Activated CD4-positive, alpha-beta T cell treated with anti-CD3 and anti-CD28 coated beads for 36 hours (primary cell): ENCODE measurements at regions of chr3 and their contacts with region 1.

Region 1: DNA sequence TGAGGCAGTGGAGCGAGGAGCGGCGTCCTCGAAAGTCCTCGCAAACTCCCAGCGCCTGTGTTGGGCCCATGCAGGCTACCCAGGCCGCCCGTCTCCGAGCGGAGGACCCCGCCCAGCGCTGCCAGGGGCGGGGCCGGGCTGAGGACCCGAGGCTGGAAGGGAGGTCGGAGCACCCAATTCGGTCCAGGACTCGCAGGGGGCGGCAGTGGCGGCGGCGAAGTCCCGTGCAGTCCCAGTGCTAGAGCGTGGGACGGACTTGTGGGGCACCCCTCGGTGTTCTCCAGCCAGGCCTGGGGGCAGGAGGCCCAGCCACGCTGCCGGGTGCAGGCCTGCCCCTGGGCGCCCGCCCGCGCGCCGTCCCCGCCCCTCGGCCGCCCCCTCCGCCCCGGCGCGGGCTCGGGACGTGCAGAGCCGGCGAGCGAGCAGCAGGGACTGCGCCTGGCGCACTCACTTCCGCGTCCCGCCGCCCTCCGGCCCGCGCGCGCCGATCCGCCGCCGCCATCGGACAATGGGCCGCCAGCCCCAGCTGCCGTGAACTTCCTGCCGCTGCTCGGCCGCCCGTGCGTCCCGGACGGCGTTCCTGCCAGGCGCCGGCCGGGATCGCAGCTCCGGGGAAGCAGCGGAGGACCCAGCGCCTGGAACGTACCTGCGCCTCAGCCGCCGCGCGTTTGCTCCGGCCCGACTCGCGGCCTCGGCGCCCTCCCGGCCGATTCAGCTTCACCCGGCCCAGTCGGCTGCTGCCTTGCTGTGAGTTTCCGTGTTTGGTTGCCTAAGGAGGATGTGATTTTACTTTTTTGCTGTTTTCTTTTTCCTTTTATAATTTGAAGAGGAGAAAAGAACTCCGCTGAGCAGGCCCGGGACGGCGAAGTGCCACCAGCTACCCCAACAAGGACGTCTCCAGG is 592 bp upstream of the LIMD1 start:
- DNase-seq: peak; percentile 82
- ATAC-seq: peak; percentile 81
- H3K4me3 Mint-ChIP-seq: peak overlapping the region; percentile 86
- H3K27ac Mint-ChIP-seq: peak overlapping the region; percentile 82
- H3K4me1 Mint-ChIP-seq: peaks cover 46% of the 10 kb centered on the region
- H3K27me3 Mint-ChIP-seq: no peaks in the 10 kb centered on the region

Region 2: DNA sequence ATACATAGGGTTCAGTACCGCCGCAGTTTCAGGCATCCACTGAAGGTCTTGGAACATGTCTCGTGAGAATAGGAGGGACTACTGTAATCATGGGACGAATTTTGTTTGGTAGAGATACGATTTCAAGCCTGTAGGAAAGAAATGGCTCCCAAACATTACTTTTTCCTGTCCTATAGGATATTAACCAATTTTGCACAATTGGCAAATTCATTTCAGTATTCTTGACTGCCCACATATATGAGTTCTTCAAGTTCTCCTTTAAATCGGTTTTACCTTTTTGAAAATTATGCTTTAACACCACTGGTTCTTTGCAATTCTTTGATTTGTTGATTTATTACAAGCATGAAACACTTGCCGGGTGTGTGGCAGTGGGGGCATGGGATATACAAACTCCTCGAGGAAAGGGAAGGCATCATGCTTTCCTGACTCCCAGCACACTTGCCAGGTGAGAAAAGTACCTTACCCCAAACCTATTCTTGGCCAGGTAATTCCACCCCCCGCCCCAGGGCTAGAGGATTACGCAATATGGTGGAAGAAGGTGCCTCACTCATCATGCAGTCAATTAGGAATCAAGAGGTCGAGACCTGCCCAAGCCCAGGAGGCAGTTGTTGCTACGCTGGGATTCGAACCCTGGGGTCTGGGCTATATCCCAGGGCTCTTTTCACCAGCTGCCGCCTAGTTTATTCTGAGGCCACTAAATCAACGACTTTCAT is 206.2 kb before region 1 on chr3:
- CTCF ChIA-PET with region 1: no interaction called
- POLR2A ChIA-PET with region 1: no interaction called
- intact Hi-C with region 1: loop called in 1 of 2 experiments (anchors 1 kb)
- DNase-seq: no peak
- ATAC-seq: peak; percentile 8
- H3K4me3 Mint-ChIP-seq: peak overlapping the region; percentile 85
- H3K27ac Mint-ChIP-seq: peak overlapping the region; percentile 51
- H3K4me1 Mint-ChIP-seq: peaks cover 13% of the 10 kb centered on the region
- H3K27me3 Mint-ChIP-seq: peaks cover 1% of the 10 kb centered on the region

Region 3: DNA sequence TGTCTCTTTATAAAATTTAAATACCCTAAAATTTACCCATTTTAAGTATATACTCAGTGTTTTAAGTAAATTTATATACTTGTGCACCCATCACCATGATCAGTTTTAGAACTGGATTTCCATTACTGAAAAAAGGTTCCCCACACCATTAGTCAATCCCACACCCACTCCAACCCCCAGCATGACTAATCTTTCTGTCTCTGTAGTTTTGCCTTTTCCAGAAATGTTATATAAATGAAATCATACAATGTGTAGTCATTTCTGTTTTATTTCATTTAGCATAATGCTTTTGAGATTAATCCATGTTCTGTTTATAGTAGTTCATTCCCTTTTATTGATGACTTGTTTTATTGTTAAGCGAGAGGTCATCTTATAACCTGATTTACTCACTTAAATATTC is 65.5 kb before region 1 on chr3:
- CTCF ChIA-PET with region 1: no interaction called
- POLR2A ChIA-PET with region 1: no interaction called
- intact Hi-C with region 1: loop called in 1 of 2 experiments (anchors 2 kb)
- DNase-seq: peak; percentile 66
- ATAC-seq: peak; percentile 76
- H3K4me3 Mint-ChIP-seq: no peak overlapping the region
- H3K27ac Mint-ChIP-seq: no peak overlapping the region
- H3K4me1 Mint-ChIP-seq: peaks cover 15% of the 10 kb centered on the region
- H3K27me3 Mint-ChIP-seq: no peaks in the 10 kb centered on the region

Region 4: GRCh38 chr3:45665101-45665572 is 71.2 kb after region 1 on chr3:
- CTCF ChIA-PET with region 1: interaction called, 14 read pairs
- POLR2A ChIA-PET with region 1: no interaction called
- intact Hi-C with region 1: loop called in 1 of 2 experiments (anchors 2 kb)
- DNase-seq: peak; percentile 76
- ATAC-seq: peak; percentile 23
- H3K4me3 Mint-ChIP-seq: peak overlapping the region; percentile 67
- H3K27ac Mint-ChIP-seq: peak overlapping the region; percentile 68
- H3K4me1 Mint-ChIP-seq: peaks cover 54% of the 10 kb centered on the region
- H3K27me3 Mint-ChIP-seq: no peaks in the 10 kb centered on the region

Region 5: GRCh38 chr3:45679805-45680204 is 85.8 kb after region 1 on chr3:
- CTCF ChIA-PET with region 1: no interaction called
- POLR2A ChIA-PET with region 1: no interaction called
- intact Hi-C with region 1: no loop called
- DNase-seq: no peak
- ATAC-seq: no peak
- H3K4me3 Mint-ChIP-seq: no peak overlapping the region
- H3K27ac Mint-ChIP-seq: no peak overlapping the region
- H3K4me1 Mint-ChIP-seq: peaks cover 25% of the 10 kb centered on the region
- H3K27me3 Mint-ChIP-seq: no peaks in the 10 kb centered on the region

Region 6: GRCh38 chr3:45807681-45808540 is 214.0 kb after region 1 on chr3:
- CTCF ChIA-PET with region 1: no interaction called
- POLR2A ChIA-PET with region 1: no interaction called
- intact Hi-C with region 1: no loop called
- DNase-seq: no peak
- ATAC-seq: no peak
- H3K4me3 Mint-ChIP-seq: no peak overlapping the region
- H3K27ac Mint-ChIP-seq: no peak overlapping the region
- H3K4me1 Mint-ChIP-seq: peaks cover 9% of the 10 kb centered on the region
- H3K27me3 Mint-ChIP-seq: no peaks in the 10 kb centered on the region

Region 7: DNA sequence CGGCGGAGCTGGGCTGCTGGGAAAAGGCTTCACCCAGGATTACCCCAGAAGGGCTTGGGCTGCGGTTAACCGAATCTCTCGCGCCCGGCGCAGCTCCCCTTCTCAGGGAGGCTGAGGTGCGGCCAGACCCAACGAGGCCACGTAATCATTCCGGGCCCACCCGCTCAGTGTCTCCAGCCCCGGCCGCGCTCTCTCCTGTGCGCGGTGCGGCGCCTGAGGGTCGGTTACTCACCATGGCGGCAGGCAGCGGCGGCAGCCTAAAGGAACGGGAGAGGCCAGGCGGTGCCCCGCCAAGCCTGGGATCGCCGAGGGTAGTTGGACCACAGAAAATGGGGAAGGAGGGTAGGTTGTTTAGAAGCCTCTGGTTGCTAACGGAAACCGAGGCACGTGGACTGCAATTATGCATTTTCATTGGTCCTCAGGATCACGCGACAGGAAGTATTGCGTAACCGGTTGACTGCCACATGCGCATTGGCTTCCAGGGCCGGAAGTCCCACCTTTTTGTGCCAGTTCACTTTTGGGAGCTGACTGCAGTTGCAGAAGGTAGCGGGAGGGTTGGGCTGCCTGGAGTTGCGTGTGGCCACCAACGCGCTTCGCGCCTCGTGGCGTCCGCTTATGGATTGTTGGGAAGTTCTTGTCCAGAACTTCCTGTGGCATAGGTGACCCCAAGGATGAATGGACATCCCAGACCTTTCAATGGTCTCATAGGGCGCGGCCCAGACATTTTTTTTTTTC is 248.0 kb after region 1 on chr3 and contains the start of gene LZTFL1:
- CTCF ChIA-PET with region 1: no interaction called
- POLR2A ChIA-PET with region 1: no interaction called
- intact Hi-C with region 1: loop called in 1 of 2 experiments (anchors 2 kb)
- DNase-seq: peak; percentile 94
- ATAC-seq: peak; percentile 89
- H3K4me3 Mint-ChIP-seq: peak within 1 kb of the TSS; percentile 87
- H3K27ac Mint-ChIP-seq: peak within 1 kb of the TSS; percentile 82
- H3K4me1 Mint-ChIP-seq: peaks cover 14% of the 10 kb centered on the region
- H3K27me3 Mint-ChIP-seq: no peaks in the 10 kb centered on the region
- total RNA-seq, gene LZTFL1: 4.5 to 6.6 TPM

Region 8: GRCh38 chr3:45929042-45929679 is 335.2 kb after region 1 on chr3:
- CTCF ChIA-PET with region 1: no interaction called
- POLR2A ChIA-PET with region 1: no interaction called
- intact Hi-C with region 1: loop called in 1 of 2 experiments (anchors 10 kb)
- DNase-seq: peak; percentile 82
- ATAC-seq: peak; percentile 95
- H3K4me3 Mint-ChIP-seq: no peak overlapping the region
- H3K27ac Mint-ChIP-seq: no peak overlapping the region
- H3K4me1 Mint-ChIP-seq: no peaks in the 10 kb centered on the region
- H3K27me3 Mint-ChIP-seq: no peaks in the 10 kb centered on the region